A673 (cell line): ENCODE measurements at regions of chr5 and their contacts with region 1.

Region 1: DNA sequence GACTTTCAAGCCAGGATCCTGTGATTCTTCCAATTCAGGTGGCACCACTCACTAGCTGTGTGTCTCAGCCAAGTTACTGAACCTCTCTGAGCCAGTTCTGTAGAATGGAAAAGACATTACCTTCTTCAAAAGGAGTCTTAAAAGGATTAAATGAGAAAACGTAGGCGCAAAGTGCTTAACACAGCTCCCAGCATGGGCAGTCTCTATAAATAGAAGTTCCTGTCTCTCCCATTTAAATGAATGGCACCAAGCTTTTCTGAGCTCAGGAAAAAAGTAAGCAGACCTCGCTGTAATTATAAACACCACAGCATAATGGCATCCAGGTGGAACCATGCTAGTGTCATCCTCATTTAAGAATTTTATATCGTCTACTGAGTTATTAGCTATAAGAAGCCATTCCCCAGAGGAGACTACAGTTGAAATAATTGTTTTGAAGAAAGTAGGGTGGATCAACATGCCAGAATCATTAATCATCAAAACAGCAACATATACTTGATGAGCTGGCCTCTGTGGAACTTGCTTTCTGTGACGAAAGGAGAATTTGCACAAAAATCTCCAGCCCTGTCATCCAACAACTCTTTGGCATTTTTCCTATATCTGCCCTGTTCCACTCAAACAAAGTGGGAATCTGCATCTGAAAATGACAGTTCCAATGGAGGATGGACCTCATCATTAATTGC is 188.9 kb downstream of the SPOCK1 start:
- DNase-seq: peak; percentile 48
- H3K4me3 ChIP-seq: no peak overlapping the region
- H3K27ac ChIP-seq: no peak overlapping the region
- H3K4me1 ChIP-seq: peaks cover 2% of the 10 kb centered on the region
- H3K27me3 ChIP-seq: no peaks in the 10 kb centered on the region
- CTCF ChIP-seq: no peak

Region 2: DNA sequence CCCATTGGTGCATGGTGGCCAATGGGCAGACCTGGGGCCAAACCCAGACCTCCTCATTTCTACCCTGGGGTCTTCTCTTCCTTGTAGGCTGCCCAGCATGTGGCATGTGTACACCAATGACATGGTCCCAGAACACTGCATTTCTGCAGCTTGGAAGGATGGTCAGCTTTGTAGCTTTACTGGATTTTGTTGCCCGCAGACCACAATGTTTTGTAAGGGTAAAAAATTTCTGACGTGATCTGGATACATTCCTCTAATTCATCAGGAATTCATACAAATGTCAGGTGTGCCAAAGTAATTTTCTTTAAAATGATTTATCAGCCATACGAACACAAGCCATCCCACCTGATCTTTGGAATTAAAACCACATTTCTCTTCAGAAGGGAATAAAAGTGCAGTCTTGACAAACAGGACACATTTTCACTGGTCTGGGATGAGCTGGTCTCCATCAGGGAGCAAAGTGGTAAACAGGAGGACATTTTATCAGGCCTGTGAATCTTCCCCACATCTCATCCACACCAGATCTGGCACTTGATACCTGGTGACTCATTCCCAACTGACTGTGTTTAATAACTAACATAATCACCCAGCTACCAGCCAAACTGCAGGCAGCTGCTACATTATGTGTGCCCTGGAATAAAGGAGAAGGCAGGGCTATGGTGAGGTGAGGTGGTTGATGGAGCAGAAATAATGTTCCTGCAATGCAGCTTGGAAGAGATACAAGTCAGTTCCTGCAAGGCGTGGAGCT is 85.0 kb after region 1 on chr5:
- CTCF ChIA-PET with region 1: no interaction called
- POLR2A ChIA-PET with region 1: no interaction called
- intact Hi-C with region 1: no loop called
- DNase-seq: no peak
- H3K4me3 ChIP-seq: no peak overlapping the region
- H3K27ac ChIP-seq: no peak overlapping the region
- H3K4me1 ChIP-seq: no peaks in the 10 kb centered on the region
- H3K27me3 ChIP-seq: peaks cover 4% of the 10 kb centered on the region
- CTCF ChIP-seq: no peak

Region 3: GRCh38 chr5:137629646-137630045 is 319.5 kb after region 1 on chr5:
- CTCF ChIA-PET with region 1: interaction called, 11 read pairs
- POLR2A ChIA-PET with region 1: no interaction called
- intact Hi-C with region 1: no loop called
- DNase-seq: peak; percentile 67
- H3K4me3 ChIP-seq: no peak overlapping the region
- H3K27ac ChIP-seq: no peak overlapping the region
- H3K4me1 ChIP-seq: no peaks in the 10 kb centered on the region
- H3K27me3 ChIP-seq: no peaks in the 10 kb centered on the region
- CTCF ChIP-seq: peak; percentile 87